Motor neuron (in vitro differentiated cells): ENCODE measurements at regions of chr14 and their contacts with region 1.

Region 1: DNA sequence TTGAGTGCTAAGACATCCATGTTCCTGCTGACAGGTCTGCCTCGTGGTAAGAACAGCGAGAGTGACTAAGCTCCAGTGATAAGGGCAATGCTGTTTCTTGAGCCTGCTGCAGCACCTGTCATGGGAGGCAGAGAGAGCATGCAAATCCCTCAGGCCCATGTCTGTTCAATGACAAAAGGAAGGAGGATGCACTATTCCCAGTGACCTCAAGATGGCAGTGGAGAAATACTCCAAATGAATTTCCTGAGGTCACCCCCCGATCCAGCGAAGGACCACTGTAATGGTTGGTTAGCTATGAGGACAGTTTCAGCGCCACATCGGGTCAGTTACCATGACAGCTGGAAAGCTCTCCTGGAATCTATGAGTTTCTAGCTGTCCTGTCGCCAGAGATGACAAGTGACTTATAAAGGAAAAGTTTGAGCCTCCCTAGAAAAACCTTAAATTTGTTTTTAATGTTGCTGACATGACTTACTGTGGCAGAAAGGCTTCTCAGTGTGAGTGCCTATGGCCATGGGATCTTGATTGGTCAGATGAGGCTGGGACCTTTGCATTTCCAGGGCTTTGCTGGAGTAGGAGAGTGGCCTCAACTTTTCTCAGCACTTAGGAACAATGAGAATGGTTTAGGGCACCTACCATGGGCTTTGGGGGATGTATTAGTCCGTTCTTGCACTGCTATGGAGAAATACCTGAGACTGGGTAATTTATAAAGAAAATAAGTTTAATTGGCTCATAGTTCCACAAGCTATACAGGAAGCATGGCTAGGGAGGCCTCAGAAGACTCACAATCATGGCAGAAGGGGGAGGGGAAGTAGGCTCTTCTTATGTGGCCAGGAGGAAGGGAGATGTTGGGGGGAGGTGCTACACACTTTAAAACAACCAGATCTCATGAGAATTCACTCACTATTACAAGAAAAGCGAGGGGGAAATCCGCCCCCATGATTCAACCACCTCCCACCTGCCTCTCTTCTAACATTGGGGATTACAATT is 88.0 kb upstream of the TMEM260 start:
- ATAC-seq: peak; percentile 24 to 98 (median 87)
- H3K4me3 ChIP-seq: no peak overlapping the region
- H3K27ac ChIP-seq: no peak overlapping the region
- H3K4me1 ChIP-seq: peaks cover 0 to 3% of the 10 kb centered on the region in 2 donors

Region 2: DNA sequence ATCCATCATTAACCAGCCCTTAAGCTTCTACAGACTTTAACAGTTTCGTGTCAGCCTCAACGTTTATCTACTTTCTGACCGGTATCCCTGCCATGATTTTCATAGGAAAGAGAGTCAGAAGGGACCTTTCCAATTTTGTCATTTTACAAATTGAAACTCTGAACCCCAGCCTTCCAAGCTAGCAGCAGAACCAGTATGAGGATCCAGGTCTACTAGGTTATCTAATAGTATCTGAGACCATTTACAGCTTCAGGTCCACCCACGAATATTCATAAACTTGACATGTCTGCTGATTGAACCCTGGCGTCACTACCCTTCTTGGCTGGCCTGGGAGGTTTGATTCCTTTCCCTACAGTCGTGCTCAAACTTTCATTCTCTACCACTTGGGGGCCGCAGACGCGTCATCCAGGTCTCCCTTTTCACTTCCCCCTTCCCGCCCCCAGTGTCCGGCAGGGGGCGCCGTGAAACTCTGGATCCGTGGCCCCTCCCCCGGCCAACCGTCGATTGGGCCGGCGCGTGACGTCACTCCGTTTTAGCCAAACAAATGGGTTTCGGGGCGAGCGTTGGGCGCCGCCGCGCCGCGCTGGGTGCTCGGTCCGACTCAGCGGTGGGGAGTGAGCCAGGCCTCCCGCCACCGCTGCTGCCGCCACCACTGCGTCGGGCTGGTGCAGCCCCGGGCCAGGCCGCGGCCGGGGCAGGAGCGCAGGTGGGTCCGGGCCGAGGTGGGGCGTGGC is 1220.6 kb before region 1 on chr14 and contains the start of gene FBXO34:
- in situ Hi-C with region 1: loop called in 1 of 9 experiments (anchors 25 kb)
- ATAC-seq: peak; percentile 86 to 90 (median 88)
- H3K4me3 ChIP-seq: peak within 1 kb of the TSS; percentile 49 to 100 (median 83)
- H3K27ac ChIP-seq: peak within 1 kb of the TSS; percentile 79 to 94
- H3K4me1 ChIP-seq: peaks cover 2 to 9% of the 10 kb centered on the region in 2 donors
- total RNA-seq, gene FBXO34: 14.1 to 31.9 (median 20.6) TPM

Region 3: DNA sequence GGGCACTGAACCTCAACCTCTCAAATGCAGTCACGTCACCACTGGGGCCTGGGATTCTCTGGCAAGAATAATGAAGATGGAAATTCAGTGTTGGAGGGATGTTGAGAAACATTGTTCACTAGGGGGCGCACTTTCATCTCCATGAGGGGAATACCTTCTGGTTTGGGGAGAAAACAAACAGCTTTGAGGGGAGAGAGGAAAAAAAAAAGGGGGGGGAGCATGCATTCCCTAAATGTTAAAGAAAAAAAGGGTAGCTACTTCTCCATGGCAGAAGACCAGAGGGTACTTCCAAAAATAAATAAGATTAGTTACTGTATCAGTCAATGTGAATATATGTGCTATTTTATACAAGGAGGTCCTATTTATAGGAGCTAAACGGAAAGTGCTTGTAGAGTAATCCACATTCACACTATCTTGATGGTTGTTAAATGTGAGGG is 1045.4 kb before region 1 on chr14:
- in situ Hi-C with region 1: loop called in 3 of 9 experiments (anchors 25 kb)
- ATAC-seq: peak in 6 of 8 experiments; percentile 34 to 84 (median 44)
- H3K4me3 ChIP-seq: no peak overlapping the region
- H3K27ac ChIP-seq: no peak overlapping the region
- H3K4me1 ChIP-seq: no peaks in the 10 kb centered on the region

Region 4: GRCh38 chr14:55454264-55455002 is 1037.2 kb before region 1 on chr14:
- in situ Hi-C with region 1: loop called in 3 of 9 experiments (anchors 25 kb)
- ATAC-seq: peak; percentile 32 to 100 (median 99)
- H3K4me3 ChIP-seq: no peak overlapping the region
- H3K27ac ChIP-seq: peak overlapping the region; percentile 30 to 63
- H3K4me1 ChIP-seq: peaks cover 11 to 14% of the 10 kb centered on the region in 2 donors

Region 5: GRCh38 chr14:57317316-57317715 is 825.7 kb after region 1 on chr14:
- in situ Hi-C with region 1: loop called in 3 of 9 experiments (anchors 25 kb)
- ATAC-seq: peak; percentile 39 to 86 (median 74)
- H3K4me3 ChIP-seq: no peak overlapping the region
- H3K27ac ChIP-seq: no peak overlapping the region
- H3K4me1 ChIP-seq: peaks cover 0 to 2% of the 10 kb centered on the region in 2 donors